MCF 10A (cell line): ENCODE measurements at regions of chr2 and their contacts with region 1.

Region 1: GRCh38 chr2:54723131-54723995 is at the start of gene EML6:
- DNase-seq: peak; percentile 99
- H3K4me3 Mint-ChIP-seq: peak within 1 kb of the TSS; percentile 87
- H3K27ac Mint-ChIP-seq: peak within 1 kb of the TSS; percentile 77
- H3K4me1 Mint-ChIP-seq: peaks cover 23% of the 10 kb centered on the region
- H3K27me3 Mint-ChIP-seq: no peaks in the 10 kb centered on the region
- CTCF ChIP-seq: no peak
- total RNA-seq, gene EML6: 0.77 and 1.7 TPM in 2 replicates

Region 2: GRCh38 chr2:53403792-53404413 is 1319.5 kb before region 1 on chr2:
- CTCF ChIA-PET with region 1: no interaction called
- POLR2A ChIA-PET with region 1: no interaction called
- intact Hi-C with region 1: loop called (anchors 10 kb)
- DNase-seq: peak; percentile 86
- H3K4me3 Mint-ChIP-seq: peak overlapping the region; percentile 39
- H3K27ac Mint-ChIP-seq: peak overlapping the region; percentile 85
- H3K4me1 Mint-ChIP-seq: peaks cover 28% of the 10 kb centered on the region
- H3K27me3 Mint-ChIP-seq: no peaks in the 10 kb centered on the region
- CTCF ChIP-seq: no peak

Region 3: DNA sequence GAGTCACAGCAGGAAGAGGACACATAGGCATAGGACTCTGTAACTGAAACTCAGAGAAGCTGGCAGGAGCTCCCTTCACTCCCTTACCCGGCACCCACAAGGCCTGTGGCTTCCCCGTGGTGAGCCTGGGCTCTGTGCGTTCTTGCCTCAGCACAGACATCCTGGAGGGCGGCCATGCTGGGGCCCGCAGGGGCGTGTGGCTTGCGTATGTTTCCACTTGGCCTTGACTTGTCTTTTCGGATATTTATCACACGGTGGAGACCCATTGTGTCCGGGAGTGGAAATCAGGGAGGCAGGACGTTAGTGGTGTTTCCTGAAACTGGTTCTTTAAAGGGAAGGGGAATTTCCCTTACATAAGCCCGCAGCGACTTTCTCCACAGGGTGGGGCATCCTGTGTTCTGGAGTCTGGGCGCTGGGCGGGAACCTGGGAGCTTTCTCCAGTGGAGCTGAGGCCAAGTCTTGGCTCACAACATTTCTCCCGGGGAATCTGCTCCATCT is 49.8 kb before region 1 on chr2:
- CTCF ChIA-PET with region 1: interaction called, 3 read pairs
- POLR2A ChIA-PET with region 1: interaction called, 15 read pairs
- intact Hi-C with region 1: no loop called
- DNase-seq: peak; percentile 88
- H3K4me3 Mint-ChIP-seq: peak overlapping the region; percentile 59
- H3K27ac Mint-ChIP-seq: peak overlapping the region; percentile 90
- H3K4me1 Mint-ChIP-seq: peaks cover 40% of the 10 kb centered on the region
- H3K27me3 Mint-ChIP-seq: no peaks in the 10 kb centered on the region
- CTCF ChIP-seq: no peak

Region 4: GRCh38 chr2:54814389-54815147 is 91.2 kb after region 1 on chr2:
- CTCF ChIA-PET with region 1: no interaction called
- POLR2A ChIA-PET with region 1: interaction called, 11 read pairs
- intact Hi-C with region 1: no loop called
- DNase-seq: peak; percentile 30
- H3K4me3 Mint-ChIP-seq: peak overlapping the region; percentile 66
- H3K27ac Mint-ChIP-seq: peak overlapping the region; percentile 46
- H3K4me1 Mint-ChIP-seq: peaks cover 22% of the 10 kb centered on the region
- H3K27me3 Mint-ChIP-seq: no peaks in the 10 kb centered on the region
- CTCF ChIP-seq: no peak

Region 5: DNA sequence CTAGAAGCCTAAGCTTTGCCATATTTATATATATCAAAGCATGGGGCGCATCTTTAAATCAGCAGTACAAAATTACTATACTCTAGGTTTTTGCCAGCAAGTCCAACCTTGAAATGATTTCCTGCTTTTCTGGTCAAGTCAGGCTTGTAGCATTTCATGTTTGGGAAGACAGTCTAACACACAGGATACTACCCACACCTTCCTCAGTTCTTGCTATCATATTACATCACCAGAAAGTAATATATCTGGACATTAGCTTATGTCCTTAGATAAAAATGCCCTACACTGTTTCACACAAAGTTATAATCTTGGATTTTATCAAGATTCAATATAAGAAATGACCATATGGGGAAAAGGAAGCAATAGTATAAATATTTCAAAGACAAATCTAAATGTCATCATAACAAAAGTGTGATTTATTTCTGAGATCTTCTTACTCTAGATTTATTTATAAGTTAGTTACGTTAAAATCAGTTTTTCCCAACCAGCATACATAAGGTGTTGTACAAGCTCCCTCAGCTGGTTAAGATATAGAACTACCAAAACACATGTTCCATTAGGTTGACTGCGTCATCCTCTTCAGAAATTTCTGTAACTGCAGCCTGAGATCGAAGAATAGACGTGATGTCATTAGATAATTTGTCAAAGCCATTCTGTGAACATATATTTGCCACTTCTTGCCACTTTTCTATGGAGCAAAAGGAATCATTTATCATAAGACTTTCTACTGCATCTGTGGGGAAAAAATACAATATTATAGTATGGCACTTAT is 452.1 kb after region 1 on chr2:
- CTCF ChIA-PET with region 1: interaction called, 4 read pairs
- POLR2A ChIA-PET with region 1: no interaction called
- intact Hi-C with region 1: loop called (anchors 5 kb)
- DNase-seq: peak; percentile 51
- H3K4me3 Mint-ChIP-seq: no peak overlapping the region
- H3K27ac Mint-ChIP-seq: peak overlapping the region; percentile 1
- H3K4me1 Mint-ChIP-seq: peaks cover 10% of the 10 kb centered on the region
- H3K27me3 Mint-ChIP-seq: no peaks in the 10 kb centered on the region
- CTCF ChIP-seq: peak; percentile 70

Region 6: GRCh38 chr2:55314985-55315384 is 591.6 kb after region 1 on chr2:
- CTCF ChIA-PET with region 1: no interaction called
- POLR2A ChIA-PET with region 1: no interaction called
- intact Hi-C with region 1: no loop called
- DNase-seq: no peak
- H3K4me3 Mint-ChIP-seq: no peak overlapping the region
- H3K27ac Mint-ChIP-seq: no peak overlapping the region
- H3K4me1 Mint-ChIP-seq: peaks cover 10% of the 10 kb centered on the region
- H3K27me3 Mint-ChIP-seq: no peaks in the 10 kb centered on the region
- CTCF ChIP-seq: no peak